ENCODE measurements at regions of chr18 and their contacts with region 1.

Region 1: GRCh38 chr18:34787931-34788532 is 77.9 kb downstream of the DTNA start:
- DNase-seq: peak in 6 of 14 experiments; percentile 7 to 67 (median 38)
- ATAC-seq: no peak
- H3K4me3 ChIP-seq: no peak overlapping the region
- H3K4me3 Mint-ChIP-seq: no peak overlapping the region
- H3K27ac ChIP-seq: no peak overlapping the region
- H3K27ac Mint-ChIP-seq: no peak overlapping the region
- H3K4me1 ChIP-seq: no peaks in the 10 kb centered on the region
- H3K4me1 Mint-ChIP-seq: no peaks in the 10 kb centered on the region
- H3K27me3 ChIP-seq: no peaks in the 10 kb centered on the region
- H3K27me3 Mint-ChIP-seq: peaks cover 19% of the 10 kb centered on the region
- CTCF ChIP-seq: peak; percentile 80

Region 2: DNA sequence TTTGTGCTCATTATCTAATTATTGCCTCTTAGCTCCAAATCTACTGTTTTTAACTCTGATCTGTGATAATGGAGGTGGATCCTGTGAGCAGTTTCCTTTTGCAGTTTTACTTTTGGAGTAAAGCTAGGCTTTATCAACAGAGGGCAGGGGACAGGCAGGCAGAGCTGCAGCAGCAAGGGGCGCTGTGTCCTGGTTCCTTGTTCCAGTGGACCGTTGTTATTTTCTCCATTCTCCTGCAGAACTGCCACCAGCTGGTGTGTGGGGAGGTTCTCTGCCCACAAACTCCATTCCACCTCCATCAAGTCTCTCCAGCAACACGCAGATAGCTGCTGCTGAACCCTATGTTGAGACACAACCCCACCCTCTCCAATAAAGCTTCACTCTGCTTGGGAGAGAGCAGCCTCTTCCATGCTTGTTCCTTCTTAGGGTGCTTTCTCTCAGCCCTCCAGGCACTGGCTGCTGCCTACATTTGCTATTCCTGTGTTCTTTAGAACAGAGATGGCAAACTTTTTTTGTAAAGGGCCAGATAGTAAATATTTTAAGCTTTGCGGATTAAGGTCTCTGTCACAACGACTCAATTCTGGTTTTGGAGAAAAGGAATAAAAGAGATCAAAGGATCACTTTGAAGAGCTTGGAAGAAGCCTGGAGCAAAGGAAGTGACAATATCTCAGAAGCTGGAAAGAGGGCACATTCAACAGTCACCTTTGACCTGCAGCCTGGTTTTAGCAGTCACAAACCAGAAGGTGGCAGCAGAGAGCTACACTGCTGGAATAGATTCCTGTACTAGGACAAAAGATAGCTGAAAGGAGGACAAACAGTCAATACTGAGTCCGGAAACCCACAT is 1556.3 kb before region 1 on chr18:
- CTCF ChIA-PET with region 1: no interaction called
- POLR2A ChIA-PET with region 1: no interaction called
- intact Hi-C with region 1: loop called in 1 of 2 experiments (anchors 10 kb)
- DNase-seq: peak in 12 of 14 experiments; percentile 1 to 52 (median 10)
- ATAC-seq: peak; percentile 59
- H3K4me3 ChIP-seq: no peak overlapping the region
- H3K4me3 Mint-ChIP-seq: no peak overlapping the region
- H3K27ac ChIP-seq: no peak overlapping the region
- H3K27ac Mint-ChIP-seq: no peak overlapping the region
- H3K4me1 ChIP-seq: no peaks in the 10 kb centered on the region
- H3K4me1 Mint-ChIP-seq: peaks cover 6% of the 10 kb centered on the region
- H3K27me3 ChIP-seq: no peaks in the 10 kb centered on the region
- H3K27me3 Mint-ChIP-seq: no peaks in the 10 kb centered on the region
- CTCF ChIP-seq: peak; percentile 54

Region 3: GRCh38 chr18:34771958-34772357 is 16.1 kb before region 1 on chr18:
- CTCF ChIA-PET with region 1: no interaction called
- POLR2A ChIA-PET with region 1: no interaction called
- intact Hi-C with region 1: no loop called
- DNase-seq: no peak
- ATAC-seq: no peak
- H3K4me3 ChIP-seq: no peak overlapping the region
- H3K4me3 Mint-ChIP-seq: no peak overlapping the region
- H3K27ac ChIP-seq: no peak overlapping the region
- H3K27ac Mint-ChIP-seq: no peak overlapping the region
- H3K4me1 ChIP-seq: no peaks in the 10 kb centered on the region
- H3K4me1 Mint-ChIP-seq: no peaks in the 10 kb centered on the region
- H3K27me3 ChIP-seq: peaks cover 0 to 6% of the 10 kb centered on the region in 2 experiments
- H3K27me3 Mint-ChIP-seq: peaks cover 17% of the 10 kb centered on the region
- CTCF ChIP-seq: no peak

Measured in CD4-positive, alpha-beta T cell (primary cell).